Breast epithelium (tissue), 4 donors: ENCODE measurements at regions of chr10 and their contacts with region 1.

Region 1: DNA sequence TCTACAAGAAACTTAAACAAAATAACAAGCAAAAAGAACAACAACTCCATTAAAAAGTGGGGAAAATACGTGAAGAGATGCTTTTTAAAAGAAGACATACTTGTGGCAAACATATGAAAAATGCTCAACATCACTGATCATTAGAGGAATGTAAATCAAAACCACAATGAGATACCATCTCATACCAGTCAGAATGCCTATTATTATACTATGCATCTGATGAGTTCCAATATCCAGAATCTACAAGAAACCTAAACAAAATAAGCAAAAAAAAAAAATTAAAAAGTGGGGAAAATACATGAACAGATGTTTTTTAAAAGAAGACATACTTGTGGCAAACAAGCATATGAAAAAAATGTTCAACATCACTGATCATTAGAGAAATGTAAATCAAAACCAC is 29.6 kb upstream of the AKR1C3 start:
- DNase-seq: no peak
- H3K4me3 ChIP-seq: no peak overlapping the region
- H3K27ac ChIP-seq: no peak overlapping the region
- H3K4me1 ChIP-seq: no peaks in the 10 kb centered on the region
- H3K27me3 ChIP-seq: no peaks in the 10 kb centered on the region
- CTCF ChIP-seq: no peak
- POLR2A ChIP-seq: no peak

Region 2: GRCh38 chr10:4663162-4663904 is 401.3 kb before region 1 on chr10:
- intact Hi-C with region 1: loop called (anchors 5 kb)
- DNase-seq: peak in 1 of 2 donors; percentile 89
- H3K4me3 ChIP-seq: no peak overlapping the region
- H3K27ac ChIP-seq: peak overlapping the region; percentile 88 to 91
- H3K4me1 ChIP-seq: peaks cover 6 to 9% of the 10 kb centered on the region in 2 donors
- H3K27me3 ChIP-seq: no peaks in the 10 kb centered on the region
- CTCF ChIP-seq: no peak
- POLR2A ChIP-seq: no peak

Region 3: GRCh38 chr10:5274795-5275194 is 210.1 kb after region 1 on chr10:
- intact Hi-C with region 1: no loop called
- DNase-seq: no peak
- H3K4me3 ChIP-seq: no peak overlapping the region
- H3K27ac ChIP-seq: no peak overlapping the region
- H3K4me1 ChIP-seq: no peaks in the 10 kb centered on the region
- H3K27me3 ChIP-seq: no peaks in the 10 kb centered on the region
- CTCF ChIP-seq: no peak
- POLR2A ChIP-seq: no peak